K562 (cell line): ENCODE measurements at regions of chr1 and their contacts with region 1.

Region 1: DNA sequence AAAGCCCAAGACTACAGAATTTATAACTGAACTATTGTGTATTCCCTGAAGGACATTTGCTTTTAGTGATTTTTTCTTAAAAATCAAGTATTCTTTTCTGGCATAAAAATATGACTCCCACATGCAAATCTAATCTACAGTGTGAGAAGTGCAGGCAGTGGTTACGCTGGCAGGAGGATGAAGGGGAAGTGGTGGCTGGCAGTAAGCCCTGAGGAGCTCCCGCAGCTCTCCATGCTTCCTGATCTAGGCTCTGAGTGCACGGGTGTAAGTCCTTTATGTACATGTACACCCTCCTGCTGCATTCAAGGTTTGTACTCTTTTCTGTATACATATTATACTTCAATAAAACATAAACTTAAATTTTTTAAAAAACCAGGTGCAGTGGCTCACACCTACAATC is 67.5 kb upstream of the PRDX6 start:
- DNase-seq: no peak
- ATAC-seq: peak; percentile 35; the same call in 1 of the 3 replicates
- H3K4me3 ChIP-seq: no peak overlapping the region
- H3K27ac ChIP-seq: no peak overlapping the region
- H3K4me1 ChIP-seq: peaks cover 6 to 9% of the 10 kb centered on the region in 2 experiments
- H3K27me3 ChIP-seq: no peaks in the 10 kb centered on the region
- CTCF ChIP-seq: no peak
- EP300 ChIP-seq: no peak
- POLR2A ChIP-seq: no peak
- RAD21 ChIP-seq: no peak

Region 2: DNA sequence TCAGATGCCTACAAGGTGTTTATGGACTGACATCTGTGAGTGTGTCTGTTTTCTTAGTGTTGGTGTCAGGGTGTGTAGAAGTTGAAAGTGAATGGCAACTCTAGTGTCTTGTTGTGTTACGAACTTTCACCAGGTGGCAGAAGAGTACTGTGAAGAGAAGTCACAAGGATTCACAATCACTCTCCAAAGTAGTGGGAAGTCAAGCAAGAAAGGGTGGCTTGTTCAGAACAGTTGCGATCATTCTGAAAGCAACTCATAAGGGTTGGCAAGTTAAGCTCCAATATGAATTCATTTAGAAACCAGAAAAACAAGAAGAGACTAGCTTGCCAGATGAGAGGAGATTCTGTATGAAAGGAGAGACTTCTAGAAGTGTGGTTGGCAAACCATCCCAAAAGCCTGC is 664.6 kb before region 1 on chr1:
- CTCF ChIA-PET with region 1: no interaction called
- POLR2A ChIA-PET with region 1: no interaction called
- in situ Hi-C with region 1: loop called (anchors 10 kb)
- intact Hi-C with region 1: no loop called
- DNase-seq: peak; percentile 28 to 71 (median 39)
- ATAC-seq: peak; percentile 90
- H3K4me3 ChIP-seq: no peak overlapping the region
- H3K27ac ChIP-seq: no peak overlapping the region
- H3K4me1 ChIP-seq: peaks cover 3 to 7% of the 10 kb centered on the region in 2 experiments; a peak in 3 of 5 replicates
- H3K27me3 ChIP-seq: no peaks in the 10 kb centered on the region; a peak in 1 of 5 replicates
- CTCF ChIP-seq: peak; percentile 69 to 88 (median 70)
- EP300 ChIP-seq: no peak
- POLR2A ChIP-seq: no peak
- RAD21 ChIP-seq: peak; percentile 99

Region 3: GRCh38 chr1:172826096-172826743 is 583.4 kb before region 1 on chr1:
- CTCF ChIA-PET with region 1: no interaction called
- POLR2A ChIA-PET with region 1: no interaction called
- in situ Hi-C with region 1: no loop called
- intact Hi-C with region 1: loop called (anchors 10 kb)
- DNase-seq: peak in 2 of 4 experiments; percentile 22 to 35
- ATAC-seq: peak; percentile 79
- H3K4me3 ChIP-seq: no peak overlapping the region
- H3K27ac ChIP-seq: no peak overlapping the region
- H3K4me1 ChIP-seq: peaks cover 0 to 11% of the 10 kb centered on the region in 2 experiments; a peak in 3 of 5 replicates
- H3K27me3 ChIP-seq: no peaks in the 10 kb centered on the region
- CTCF ChIP-seq: peak; percentile 50 to 75 (median 64); a peak in 5 of 6 replicates
- EP300 ChIP-seq: no peak
- POLR2A ChIP-seq: no peak
- RAD21 ChIP-seq: peak; percentile 92 to 96

Region 4: DNA sequence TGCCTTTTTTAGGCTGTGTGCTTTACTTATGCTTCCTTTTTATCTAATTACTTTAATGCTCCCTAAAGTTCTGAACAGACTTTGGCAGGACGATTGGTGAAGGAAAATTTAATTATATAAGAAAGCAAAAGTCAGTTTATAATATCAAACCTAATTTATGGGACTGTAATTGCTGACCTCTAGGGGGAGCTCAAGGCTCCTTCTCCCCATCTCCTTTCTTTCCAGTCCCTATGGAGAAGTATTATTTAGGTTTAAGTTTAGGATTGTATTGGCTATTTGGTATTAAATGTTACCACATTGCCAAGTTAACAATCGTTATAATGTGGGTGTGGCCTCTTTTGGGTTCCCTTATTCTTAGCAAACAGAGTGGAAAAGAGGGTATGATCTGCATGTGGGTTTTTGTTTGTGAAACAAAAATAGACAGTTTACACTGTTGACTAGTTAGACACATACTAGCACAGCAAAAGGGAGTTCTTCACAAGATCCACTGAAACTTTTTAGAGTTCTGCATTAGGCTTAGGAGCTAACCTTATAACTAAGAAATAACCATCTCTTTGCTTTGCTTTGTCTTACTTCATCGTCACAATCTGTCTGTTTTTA is 154.3 kb before region 1 on chr1:
- CTCF ChIA-PET with region 1: no interaction called
- POLR2A ChIA-PET with region 1: no interaction called
- in situ Hi-C with region 1: loop called (anchors 5 kb)
- intact Hi-C with region 1: no loop called
- DNase-seq: peak; percentile 60 to 77 (median 66)
- ATAC-seq: peak; percentile 87
- H3K4me3 ChIP-seq: no peak overlapping the region
- H3K27ac ChIP-seq: no peak overlapping the region
- H3K4me1 ChIP-seq: peaks cover 0 to 7% of the 10 kb centered on the region in 2 experiments; a peak in 1 of 5 replicates
- H3K27me3 ChIP-seq: no peaks in the 10 kb centered on the region
- CTCF ChIP-seq: peak; percentile 51 to 92 (median 77); a peak in 5 of 6 replicates
- EP300 ChIP-seq: no peak; the same call in 1 of the 2 replicates
- POLR2A ChIP-seq: no peak
- RAD21 ChIP-seq: peak; percentile 72 to 89

Region 5: GRCh38 chr1:173269490-173270230 is 140.0 kb before region 1 on chr1:
- CTCF ChIA-PET with region 1: no interaction called
- POLR2A ChIA-PET with region 1: interaction called, 3 read pairs
- in situ Hi-C with region 1: no loop called
- intact Hi-C with region 1: loop called (anchors 5 kb)
- DNase-seq: peak in 2 of 4 experiments; percentile 63 to 69
- ATAC-seq: peak; percentile 97
- H3K4me3 ChIP-seq: no peak overlapping the region
- H3K27ac ChIP-seq: peak overlapping the region; percentile 52; the same call in 2 of the 3 replicates
- H3K4me1 ChIP-seq: peaks cover 0 to 29% of the 10 kb centered on the region in 2 experiments; a peak in 3 of 5 replicates
- H3K27me3 ChIP-seq: no peaks in the 10 kb centered on the region
- CTCF ChIP-seq: no peak
- EP300 ChIP-seq: peak; percentile 90
- POLR2A ChIP-seq: no peak
- RAD21 ChIP-seq: peak; percentile 25 to 41

Region 6: GRCh38 chr1:173330149-173330951 is 79.3 kb before region 1 on chr1:
- CTCF ChIA-PET with region 1: no interaction called
- POLR2A ChIA-PET with region 1: no interaction called
- in situ Hi-C with region 1: no loop called
- intact Hi-C with region 1: loop called (anchors 5 kb)
- DNase-seq: peak; percentile 21 to 84 (median 47)
- ATAC-seq: peak; percentile 91
- H3K4me3 ChIP-seq: no peak overlapping the region
- H3K27ac ChIP-seq: peak overlapping the region; percentile 75; the same call in 2 of the 3 replicates
- H3K4me1 ChIP-seq: peaks cover 0 to 32% of the 10 kb centered on the region in 2 experiments; a peak in 4 of 5 replicates
- H3K27me3 ChIP-seq: no peaks in the 10 kb centered on the region
- CTCF ChIP-seq: no peak
- EP300 ChIP-seq: peak; percentile 87
- POLR2A ChIP-seq: no peak
- RAD21 ChIP-seq: no peak; a peak in 1 of 4 replicates

Region 7: GRCh38 chr1:173431304-173432045 is 21.9 kb after region 1 on chr1:
- CTCF ChIA-PET with region 1: no interaction called
- POLR2A ChIA-PET with region 1: no interaction called
- in situ Hi-C with region 1: no loop called
- intact Hi-C with region 1: no loop called
- DNase-seq: peak; percentile 79 to 97 (median 80)
- ATAC-seq: peak; percentile 81
- H3K4me3 ChIP-seq: no peak overlapping the region
- H3K27ac ChIP-seq: no peak overlapping the region
- H3K4me1 ChIP-seq: peaks cover 10 to 58% of the 10 kb centered on the region in 2 experiments
- H3K27me3 ChIP-seq: no peaks in the 10 kb centered on the region
- CTCF ChIP-seq: peak; percentile 91 to 96 (median 95)
- EP300 ChIP-seq: no peak
- POLR2A ChIP-seq: no peak
- RAD21 ChIP-seq: peak; percentile 97 to 98

Region 8: DNA sequence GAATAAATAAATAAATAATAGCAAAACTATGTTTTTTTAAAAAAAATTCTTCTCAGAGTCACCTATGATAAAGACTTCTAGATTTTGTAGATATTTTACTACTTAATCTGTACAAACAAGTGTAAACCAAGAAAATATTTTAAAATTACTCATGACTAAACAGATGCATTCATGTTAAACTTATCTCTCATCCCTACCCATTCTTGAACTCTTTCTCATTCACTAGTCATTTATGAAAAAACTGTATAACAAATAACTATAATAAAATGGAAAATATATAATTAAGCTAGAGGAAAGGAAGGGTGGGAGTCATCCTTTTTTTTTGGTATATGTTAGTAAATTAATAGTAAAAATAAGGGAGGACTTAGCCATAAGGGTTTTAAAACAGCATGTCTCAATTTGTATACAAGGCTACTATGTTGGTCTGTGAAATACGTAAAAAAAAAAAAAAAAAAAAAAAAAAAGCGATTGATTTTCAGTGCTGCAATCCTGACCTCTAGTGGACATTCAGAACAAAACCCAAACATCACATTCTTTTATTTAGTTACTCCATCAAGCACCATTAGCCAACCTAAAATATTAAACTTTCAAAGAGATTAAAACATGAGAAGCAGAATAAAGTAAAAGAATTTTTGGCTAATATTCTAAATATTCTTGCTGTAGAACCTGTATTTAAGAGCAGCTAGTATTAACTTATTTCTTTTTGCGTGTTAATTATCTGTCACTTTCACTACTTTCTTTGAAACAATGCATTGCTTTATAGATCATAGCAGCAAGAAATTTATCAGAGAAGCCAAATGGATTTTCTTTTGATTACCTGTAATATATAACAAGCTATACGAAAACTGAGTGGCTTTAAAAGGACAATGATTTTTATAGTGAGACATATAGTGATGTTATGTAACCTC is 1334.3 kb after region 1 on chr1:
- CTCF ChIA-PET with region 1: no interaction called
- POLR2A ChIA-PET with region 1: no interaction called
- in situ Hi-C with region 1: loop called (anchors 10 kb)
- intact Hi-C with region 1: no loop called
- DNase-seq: peak; percentile 32 to 55 (median 44)
- ATAC-seq: peak; percentile 40
- H3K4me3 ChIP-seq: no peak overlapping the region
- H3K27ac ChIP-seq: no peak overlapping the region
- H3K4me1 ChIP-seq: peaks cover 4 to 15% of the 10 kb centered on the region in 2 experiments
- H3K27me3 ChIP-seq: no peaks in the 10 kb centered on the region
- CTCF ChIP-seq: peak; percentile 46 to 85 (median 51); a peak in 5 of 6 replicates
- EP300 ChIP-seq: no peak
- POLR2A ChIP-seq: no peak
- RAD21 ChIP-seq: peak; percentile 55 to 64